Pancreas (tissue), 10 donors: ENCODE measurements at regions of chr5 and their contacts with region 1.

Region 1: DNA sequence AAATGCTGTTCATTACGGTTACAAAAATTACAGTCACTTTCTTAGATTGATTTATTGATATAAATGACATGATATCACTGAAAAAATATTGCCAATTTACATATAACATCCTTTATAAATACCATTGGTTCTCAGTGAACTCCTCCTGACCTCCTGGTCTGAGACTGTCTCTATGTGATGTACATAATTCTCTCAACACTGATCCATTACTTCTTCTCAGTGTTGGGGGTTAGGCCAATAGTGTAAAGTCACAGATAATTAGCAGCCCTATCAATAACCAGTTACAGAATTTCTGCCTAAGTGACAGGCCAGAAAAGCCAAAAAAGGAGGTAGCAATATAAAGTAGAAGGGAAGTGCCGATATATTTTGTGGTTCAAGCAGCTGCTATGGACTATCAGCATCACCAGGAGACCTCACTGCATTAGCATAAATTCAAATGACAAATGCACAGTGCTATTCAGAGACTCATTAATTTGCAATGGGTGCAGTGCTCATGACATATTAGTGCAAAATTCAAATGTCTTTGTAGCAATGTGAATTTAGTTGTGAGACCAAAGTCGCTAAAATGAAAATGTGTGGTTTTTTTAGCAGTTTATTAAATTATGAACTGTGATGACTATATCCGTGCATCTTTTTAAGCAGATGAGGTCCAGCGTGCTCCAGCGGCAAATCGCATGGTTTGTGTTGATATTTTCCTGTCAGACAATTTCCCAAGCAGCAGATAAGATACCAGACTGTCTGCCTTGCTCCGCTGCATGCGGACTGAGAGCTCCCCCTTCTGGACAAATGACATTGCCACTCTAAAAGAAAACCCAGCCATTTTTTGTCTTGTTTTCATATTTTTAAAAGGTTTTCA is 144.6 kb downstream of the CETN3 start:
- DNase-seq: peak in 5 of 6 donors; percentile 21 to 54 (median 39)
- ATAC-seq: peak in 3 of 4 donors; percentile 75 to 80 (median 78)
- H3K4me3 ChIP-seq: no peak overlapping the region
- H3K27ac ChIP-seq: no peak overlapping the region
- H3K4me1 ChIP-seq: no peaks in the 10 kb centered on the region
- H3K27me3 ChIP-seq: no peaks in the 10 kb centered on the region
- CTCF ChIP-seq: peak; percentile 60 to 88 (median 79)

Region 2: GRCh38 chr5:88729084-88729828 is 1535.7 kb before region 1 on chr5:
- intact Hi-C with region 1: loop called in 1 of 3 experiments (anchors 5 kb)
- DNase-seq: peak in 4 of 6 donors; percentile 17 to 66 (median 35)
- ATAC-seq: peak; percentile 73 to 91 (median 90)
- H3K4me3 ChIP-seq: no peak overlapping the region
- H3K27ac ChIP-seq: no peak overlapping the region
- H3K4me1 ChIP-seq: no peaks in the 10 kb centered on the region
- H3K27me3 ChIP-seq: no peaks in the 10 kb centered on the region
- CTCF ChIP-seq: peak; percentile 38 to 69 (median 64)